Ascending aorta (tissue), 2 donors: ENCODE measurements at regions of chr2 and their contacts with region 1.

Region 1: GRCh38 chr2:55157474-55157884 is 74.6 kb downstream of the CLHC1 start:
- DNase-seq: peak in 1 of 2 donors; percentile 63
- H3K4me3 ChIP-seq: no peak overlapping the region
- H3K27ac ChIP-seq: peak overlapping the region; percentile 79 to 81
- H3K4me1 ChIP-seq: peaks cover 14 to 58% of the 10 kb centered on the region in 2 donors
- H3K27me3 ChIP-seq: no peaks in the 10 kb centered on the region
- CTCF ChIP-seq: peak in 2 of 3 experiments; percentile 31 to 36

Region 2: DNA sequence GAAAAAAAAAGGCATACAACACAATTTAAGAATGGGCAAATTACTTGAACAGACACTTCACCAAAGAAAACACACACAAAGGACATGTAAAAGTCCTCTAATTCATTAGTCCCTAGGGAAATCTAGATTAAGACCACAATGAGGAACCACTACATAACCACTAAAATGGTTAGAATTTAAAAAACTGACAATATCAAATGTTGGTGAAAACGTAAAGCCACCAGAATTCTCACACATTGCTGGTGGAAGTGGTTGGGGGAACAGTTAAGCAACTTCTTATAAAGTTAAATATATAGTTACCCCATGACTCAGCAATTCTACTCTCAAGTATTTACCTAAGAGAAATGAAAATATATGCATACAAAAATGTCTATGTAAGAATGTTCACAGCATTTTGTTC is 119.1 kb before region 1 on chr2:
- intact Hi-C with region 1: no loop called
- DNase-seq: no peak
- H3K4me3 ChIP-seq: no peak overlapping the region
- H3K27ac ChIP-seq: no peak overlapping the region
- H3K4me1 ChIP-seq: peaks cover 0 to 10% of the 10 kb centered on the region in 2 donors
- H3K27me3 ChIP-seq: no peaks in the 10 kb centered on the region
- CTCF ChIP-seq: no peak

Region 3: GRCh38 chr2:55111570-55112228 is 45.8 kb before region 1 on chr2:
- intact Hi-C with region 1: loop called (anchors 2 kb)
- DNase-seq: peak; percentile 66 to 92
- H3K4me3 ChIP-seq: no peak overlapping the region
- H3K27ac ChIP-seq: peak overlapping the region; percentile 81 to 88
- H3K4me1 ChIP-seq: peaks cover 9 to 32% of the 10 kb centered on the region in 2 donors
- H3K27me3 ChIP-seq: no peaks in the 10 kb centered on the region
- CTCF ChIP-seq: no peak

Region 4: DNA sequence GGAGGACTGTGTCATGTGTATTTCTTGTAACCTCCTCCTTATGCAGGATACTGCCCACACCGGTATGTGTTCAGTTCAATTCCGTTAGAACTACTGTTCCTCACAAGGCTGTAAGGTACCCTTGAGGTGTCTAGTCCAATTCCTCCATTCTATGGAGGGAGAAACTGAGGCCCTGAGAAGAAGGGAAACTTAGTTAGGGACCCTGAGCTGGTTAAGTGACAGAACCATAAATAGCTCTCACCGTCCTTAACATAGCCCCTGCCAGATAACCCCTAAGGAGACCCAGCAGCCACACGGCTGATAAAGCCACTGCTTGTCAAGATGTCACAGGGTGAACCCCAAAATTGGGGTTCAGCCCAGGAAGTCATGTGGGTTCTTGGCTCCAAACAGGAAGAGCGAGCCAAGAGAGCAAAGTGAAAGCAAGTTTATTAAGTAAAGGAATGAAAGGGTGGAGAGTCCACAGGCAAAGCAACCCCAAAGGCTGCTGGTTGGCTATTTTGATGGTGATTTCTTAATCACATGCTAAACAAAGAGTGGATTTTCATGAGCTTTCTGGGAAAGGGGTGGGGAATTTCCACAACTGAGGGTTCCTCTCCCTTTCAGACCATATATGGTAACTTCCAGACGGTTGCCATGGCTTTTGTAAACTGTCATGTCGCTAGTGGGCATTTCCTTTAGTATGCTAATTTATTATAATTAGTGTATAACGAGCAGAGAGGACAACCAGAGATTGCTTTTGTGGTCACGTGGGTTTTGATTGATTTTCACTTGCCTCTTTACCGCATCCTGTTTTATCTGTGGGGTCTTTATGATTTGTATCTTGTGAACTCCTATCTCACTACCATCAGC is 23.8 kb before region 1 on chr2:
- intact Hi-C with region 1: loop called (anchors 2 kb)
- DNase-seq: peak in 1 of 2 donors; percentile 83
- H3K4me3 ChIP-seq: peak overlapping the region; percentile 46 to 66
- H3K27ac ChIP-seq: peak overlapping the region; percentile 70 to 79
- H3K4me1 ChIP-seq: peaks cover 4% of the 10 kb centered on the region in 2 donors
- H3K27me3 ChIP-seq: no peaks in the 10 kb centered on the region
- CTCF ChIP-seq: no peak